ENCODE measurements at regions of chr11 and their contacts with region 1.

Region 1: GRCh38 chr11:129750349-129751292 is 65.0 kb upstream of the TMEM45B start:
- DNase-seq: peak; percentile 2
- H3K4me3 ChIP-seq: no peak overlapping the region
- H3K27me3 ChIP-seq: peaks cover 7% of the 10 kb centered on the region
- CTCF ChIP-seq: peak; percentile 89

Region 2: DNA sequence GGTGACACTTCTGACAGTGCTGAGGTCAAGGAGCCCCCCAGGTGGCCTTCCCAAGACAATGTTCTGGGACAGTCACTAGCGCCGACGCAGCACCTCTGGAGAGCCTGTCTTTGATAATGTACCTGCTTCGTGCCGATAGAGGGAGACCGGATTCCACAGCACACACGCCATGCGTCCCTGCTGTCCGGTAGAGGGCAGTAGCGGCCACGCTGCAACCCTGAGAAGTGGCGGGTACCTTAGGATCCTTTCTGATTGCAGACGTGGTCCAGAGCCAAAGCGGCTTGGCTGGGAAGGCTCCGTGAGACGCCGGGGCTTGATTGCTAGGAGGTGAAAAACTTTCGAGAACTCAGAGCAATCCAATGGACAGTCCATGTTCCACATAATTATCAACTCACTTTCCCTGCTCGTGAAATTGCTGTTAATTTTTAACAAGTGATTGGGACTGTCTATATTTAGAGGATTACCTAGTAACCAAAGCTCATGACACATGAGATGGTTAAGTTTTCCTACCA is 386.4 kb before region 1 on chr11:
- CTCF ChIA-PET with region 1: interaction called, 73 read pairs
- POLR2A ChIA-PET with region 1: no interaction called
- DNase-seq: peak; percentile 18
- H3K4me3 ChIP-seq: no peak overlapping the region
- H3K27me3 ChIP-seq: peaks cover 9% of the 10 kb centered on the region
- CTCF ChIP-seq: peak; percentile 100

Region 3: GRCh38 chr11:129375751-129376657 is 374.6 kb before region 1 on chr11 and contains the start of gene BARX2:
- CTCF ChIA-PET with region 1: interaction called, 25 read pairs
- POLR2A ChIA-PET with region 1: no interaction called
- DNase-seq: no peak
- H3K4me3 ChIP-seq: no peak within 1 kb of the TSS
- H3K27me3 ChIP-seq: peaks cover 54% of the 10 kb centered on the region
- CTCF ChIP-seq: peak; percentile 56
- polyA plus RNA-seq, gene BARX2: not detected in 2 replicates

Region 4: GRCh38 chr11:129720156-129720684 is 30.4 kb before region 1 on chr11:
- CTCF ChIA-PET with region 1: no interaction called
- POLR2A ChIA-PET with region 1: no interaction called
- DNase-seq: no peak
- H3K4me3 ChIP-seq: no peak overlapping the region
- H3K27me3 ChIP-seq: peaks cover 4% of the 10 kb centered on the region
- CTCF ChIP-seq: no peak

Region 5: GRCh38 chr11:129739339-129739738 is 11.3 kb before region 1 on chr11:
- CTCF ChIA-PET with region 1: interaction called, 13 read pairs
- POLR2A ChIA-PET with region 1: no interaction called
- DNase-seq: no peak
- H3K4me3 ChIP-seq: no peak overlapping the region
- H3K27me3 ChIP-seq: peaks cover 7% of the 10 kb centered on the region; the same call in 1 of the 2 replicates
- CTCF ChIP-seq: no peak

Region 6: GRCh38 chr11:129766898-129767604 is 16.4 kb after region 1 on chr11:
- CTCF ChIA-PET with region 1: interaction called, 17 read pairs
- POLR2A ChIA-PET with region 1: no interaction called
- DNase-seq: no peak
- H3K4me3 ChIP-seq: no peak overlapping the region
- H3K27me3 ChIP-seq: no peaks in the 10 kb centered on the region
- CTCF ChIP-seq: peak; percentile 70